ENCODE measurements at regions of chr20 and their contacts with region 1.

Region 1: GRCh38 chr20:5844063-5844681 is 94.0 kb downstream of the SHLD1 start:
- DNase-seq: peak; percentile 41
- H3K4me3 Mint-ChIP-seq: peak overlapping the region; percentile 70
- H3K27ac Mint-ChIP-seq: peak overlapping the region; percentile 84
- H3K4me1 Mint-ChIP-seq: peaks cover 35% of the 10 kb centered on the region
- H3K27me3 Mint-ChIP-seq: peaks cover 3% of the 10 kb centered on the region

Region 2: DNA sequence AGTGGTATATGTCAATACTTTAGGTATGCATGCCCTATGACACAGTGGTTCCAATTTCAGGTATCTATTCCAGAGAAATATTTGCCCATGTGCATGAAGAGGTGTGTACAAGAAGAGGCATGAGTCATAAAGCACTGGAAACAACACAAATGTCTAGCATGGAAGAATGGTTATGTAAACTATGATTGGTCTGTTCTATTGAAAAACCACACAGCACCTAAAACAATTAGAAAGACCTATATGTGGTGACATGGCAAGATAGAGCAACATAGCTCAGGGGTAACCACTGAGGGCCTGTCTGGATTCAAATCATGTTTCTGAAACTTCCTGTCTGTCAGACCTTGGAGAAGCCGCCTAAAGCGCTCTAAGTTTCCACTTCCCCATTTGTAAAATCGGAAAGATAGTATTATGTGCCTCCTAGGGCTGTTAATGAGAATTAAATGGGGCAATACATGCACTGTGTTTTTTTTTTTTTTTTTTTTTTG is 170.0 kb before region 1 on chr20:
- intact Hi-C with region 1: loop called (anchors 1 kb)
- DNase-seq: no peak
- H3K4me3 Mint-ChIP-seq: no peak overlapping the region
- H3K27ac Mint-ChIP-seq: peak overlapping the region; percentile 5
- H3K4me1 Mint-ChIP-seq: peaks cover 7% of the 10 kb centered on the region
- H3K27me3 Mint-ChIP-seq: peaks cover under 1% of the 10 kb centered on the region

Region 3: GRCh38 chr20:5757949-5758348 is 86.2 kb before region 1 on chr20:
- intact Hi-C with region 1: no loop called
- DNase-seq: no peak
- H3K4me3 Mint-ChIP-seq: no peak overlapping the region
- H3K27ac Mint-ChIP-seq: no peak overlapping the region
- H3K4me1 Mint-ChIP-seq: peaks cover 22% of the 10 kb centered on the region
- H3K27me3 Mint-ChIP-seq: no peaks in the 10 kb centered on the region

Region 4: DNA sequence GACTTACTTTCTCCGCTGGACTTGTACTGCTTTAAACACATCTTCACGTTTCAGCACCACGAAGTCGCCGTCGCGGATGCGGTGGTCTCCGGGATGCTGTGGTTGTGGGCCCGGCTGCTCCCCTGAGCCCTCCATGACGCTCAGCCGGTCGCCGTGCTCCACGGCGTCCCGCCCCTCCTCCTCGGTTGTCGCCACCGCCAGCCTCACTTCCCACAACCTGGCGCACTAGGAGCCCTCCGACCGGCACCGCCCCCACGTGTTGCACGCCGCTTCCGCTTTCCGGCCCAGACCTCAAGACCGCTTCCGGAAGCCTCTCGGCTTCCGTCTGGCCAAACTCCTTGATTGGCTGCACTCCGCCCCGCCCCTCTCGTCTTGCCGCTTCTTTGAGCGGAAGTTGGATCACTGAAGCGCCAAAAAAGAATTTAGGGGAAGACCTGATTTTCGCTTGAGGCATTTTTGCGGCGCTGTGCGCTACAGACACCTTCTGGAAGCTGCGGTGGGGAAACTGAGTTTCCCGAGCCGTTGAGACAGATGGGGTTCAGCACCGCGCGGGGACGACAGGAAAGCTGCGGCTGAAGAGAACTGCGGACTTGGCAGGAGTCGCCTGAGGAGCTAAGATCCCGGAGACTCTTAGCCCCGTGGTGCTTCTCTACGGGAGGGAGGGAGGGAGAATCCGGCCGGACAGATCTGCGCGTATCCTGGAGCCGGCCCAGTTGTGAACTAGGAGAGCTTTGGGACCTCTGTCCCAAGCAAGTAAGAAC is 106.3 kb after region 1 on chr20 and contains the starts of genes MCM8 and TRMT6:
- intact Hi-C with region 1: loop called (anchors 1 kb)
- DNase-seq: peak; percentile 95
- H3K4me3 Mint-ChIP-seq: peak within 1 kb of the TSS; percentile 90
- H3K27ac Mint-ChIP-seq: peak within 1 kb of the TSS; percentile 91
- H3K4me1 Mint-ChIP-seq: peaks cover 56% of the 10 kb centered on the region
- H3K27me3 Mint-ChIP-seq: peaks cover 2% of the 10 kb centered on the region
- total RNA-seq, gene MCM8: 36.5 and 38.8 TPM in 2 replicates
- total RNA-seq, gene TRMT6: 36.1 and 38.9 TPM in 2 replicates

Region 5: GRCh38 chr20:5996765-5997164 is 152.6 kb after region 1 on chr20:
- intact Hi-C with region 1: loop called (anchors 2 kb)
- DNase-seq: peak; percentile 57
- H3K4me3 Mint-ChIP-seq: peak overlapping the region; percentile 2
- H3K27ac Mint-ChIP-seq: peak overlapping the region; percentile 77
- H3K4me1 Mint-ChIP-seq: peaks cover 21% of the 10 kb centered on the region
- H3K27me3 Mint-ChIP-seq: no peaks in the 10 kb centered on the region

Region 6: DNA sequence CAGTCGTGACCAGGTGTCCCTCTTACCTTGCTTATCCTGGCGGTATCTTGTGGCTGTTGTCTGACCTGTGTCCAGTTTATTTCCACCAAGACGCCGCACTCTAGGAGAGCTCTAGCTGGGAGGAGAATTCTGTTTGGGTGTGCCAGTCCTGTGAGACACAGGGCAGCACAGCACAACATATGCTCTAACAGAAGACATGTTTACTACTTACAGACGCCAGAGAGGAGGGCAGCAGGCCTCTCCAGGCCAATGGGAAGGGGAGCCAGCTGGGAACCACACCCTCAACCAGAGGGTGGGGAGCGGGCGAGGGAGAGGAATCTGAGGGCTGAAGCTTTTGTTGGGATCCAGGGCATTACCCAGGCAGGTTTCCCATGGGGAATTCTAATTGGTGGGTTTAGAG is 303.9 kb after region 1 on chr20:
- intact Hi-C with region 1: no loop called
- DNase-seq: no peak
- H3K4me3 Mint-ChIP-seq: no peak overlapping the region
- H3K27ac Mint-ChIP-seq: no peak overlapping the region
- H3K4me1 Mint-ChIP-seq: no peaks in the 10 kb centered on the region
- H3K27me3 Mint-ChIP-seq: peaks cover 7% of the 10 kb centered on the region

Region 7: DNA sequence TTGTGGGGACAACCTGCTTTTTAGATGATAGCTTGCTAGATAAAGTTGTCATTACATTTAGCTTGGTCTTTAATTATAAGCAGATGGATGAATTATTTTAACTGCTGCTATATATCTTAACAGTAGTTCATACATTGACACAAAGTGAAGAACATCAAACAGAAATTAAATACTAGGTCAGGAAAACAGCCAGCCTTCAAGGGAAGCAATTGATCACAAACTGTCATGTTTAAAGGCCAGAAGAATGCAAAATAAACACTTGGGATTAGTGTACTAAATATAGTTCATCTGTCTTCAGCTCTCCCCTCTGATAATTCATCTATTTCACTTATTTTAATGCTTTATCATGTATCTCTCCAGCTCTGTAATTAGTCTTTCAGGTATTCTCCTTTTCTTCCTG is 503.7 kb after region 1 on chr20:
- intact Hi-C with region 1: no loop called
- DNase-seq: no peak
- H3K4me3 Mint-ChIP-seq: no peak overlapping the region
- H3K27ac Mint-ChIP-seq: no peak overlapping the region
- H3K4me1 Mint-ChIP-seq: no peaks in the 10 kb centered on the region
- H3K27me3 Mint-ChIP-seq: no peaks in the 10 kb centered on the region

Measured in activated T-helper 1 cell treated with anti-CD3 and anti-CD28 coated beads, Interleukin-12 subunit alpha, Interleukin-12 subunit beta, Interleukin-2, Interleukin-4 antibody, amounts not matched to agents 30 ng/mL and 10 ng/mL and 1 ng/mL, durations not matched to agents 14 hours and 24 hours and 36 hours (primary cell).